ENCODE measurements at regions of chr14 and their contacts with region 1.

Region 1: DNA sequence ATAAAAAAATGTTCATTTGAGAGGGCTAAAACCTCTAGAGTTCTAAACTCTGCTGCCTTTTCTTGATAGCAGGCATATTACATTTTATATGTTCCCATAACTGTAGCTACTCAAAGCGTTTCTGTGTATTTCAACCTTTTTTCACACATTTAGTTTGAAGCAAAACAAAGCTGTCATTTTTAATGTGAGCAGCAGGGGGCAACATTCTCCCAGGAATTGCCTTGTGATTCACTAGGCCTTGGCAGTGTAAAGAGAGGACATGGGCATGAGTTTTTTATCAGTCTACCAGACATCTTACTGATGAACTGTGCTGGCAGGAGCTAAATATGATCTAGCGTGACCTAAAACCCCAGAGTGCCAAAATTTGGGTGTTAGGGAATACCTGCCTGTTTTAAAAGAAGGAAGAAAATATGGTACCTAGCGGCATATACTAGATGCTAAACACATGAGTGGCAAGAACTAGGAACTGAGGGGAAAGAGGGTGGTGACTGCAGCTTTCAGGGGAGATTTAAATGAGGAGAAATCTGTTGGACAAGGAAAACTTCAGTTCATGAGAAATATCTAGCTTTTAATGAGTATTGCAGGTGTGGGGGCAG is 65.3 kb downstream of the IFT43 start:
- DNase-seq: no peak

Region 2: GRCh38 chr14:76339728-76340615 is 289.1 kb after region 1 on chr14:
- intact Hi-C with region 1: no loop called
- DNase-seq: peak; percentile 47

Region 3: DNA sequence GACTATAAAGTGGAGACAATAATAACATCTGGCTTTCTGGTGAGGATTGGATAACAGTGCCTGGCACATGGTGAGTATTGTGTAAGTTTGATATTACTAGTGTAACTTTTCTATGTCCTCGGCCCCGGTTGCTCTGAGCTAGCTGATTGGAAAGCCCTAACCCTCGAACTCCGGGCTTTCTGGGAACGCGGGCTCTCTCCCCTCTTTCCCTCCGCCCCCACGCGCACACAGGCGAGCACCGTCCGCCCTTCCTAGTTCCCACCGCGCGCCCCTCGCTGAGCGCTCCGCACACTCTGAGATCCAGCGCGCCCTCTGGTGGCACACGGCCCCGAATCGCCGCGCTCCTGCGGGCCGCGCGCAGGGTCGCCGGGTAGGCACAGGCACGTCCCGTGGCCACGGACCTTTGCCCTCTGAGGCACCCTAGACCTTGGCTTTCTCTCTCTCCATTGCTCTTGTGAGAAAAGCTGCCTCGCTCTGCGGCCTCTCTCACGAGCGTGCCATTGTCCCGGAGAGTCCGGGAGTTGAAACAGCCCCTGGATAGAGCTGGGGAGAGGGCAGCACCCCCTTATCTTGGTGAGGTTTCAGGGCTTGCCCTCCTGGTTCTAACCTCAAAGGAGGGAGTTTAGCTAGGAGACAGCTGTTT is 301.9 kb after region 1 on chr14:
- intact Hi-C with region 1: loop called (anchors 5 kb)
- DNase-seq: peak; percentile 70

Region 4: GRCh38 chr14:76386915-76387782 is 336.3 kb after region 1 on chr14:
- intact Hi-C with region 1: loop called (anchors 1 kb)
- DNase-seq: peak; percentile 79

Region 5: DNA sequence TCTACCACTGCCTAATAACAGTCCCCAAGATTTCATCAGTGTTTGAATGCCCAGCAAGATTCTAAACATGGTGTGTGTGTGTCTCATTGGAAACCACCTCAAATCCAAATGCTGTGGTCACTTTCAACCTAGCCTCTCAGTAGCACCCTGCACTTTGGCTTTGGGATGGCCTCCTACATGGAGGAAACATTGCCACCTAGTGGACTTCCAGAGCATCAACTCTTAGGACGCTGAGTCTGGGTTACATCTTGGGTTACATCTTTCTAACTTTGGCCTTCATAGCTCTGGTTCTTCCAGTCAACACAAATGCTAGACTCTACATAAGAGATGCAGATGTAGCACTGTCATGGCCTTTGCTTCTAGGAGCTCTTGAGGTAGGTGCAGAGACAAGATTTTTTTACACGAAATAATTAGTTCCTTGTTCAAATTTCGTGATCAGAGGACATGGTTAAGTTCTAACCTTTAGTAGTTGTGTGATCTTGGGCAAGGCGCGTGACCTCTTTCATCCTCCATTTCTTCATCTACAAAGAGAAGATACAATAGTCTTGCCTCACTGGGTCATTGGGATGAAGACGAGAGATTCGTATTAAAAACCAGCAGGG is 596.9 kb after region 1 on chr14:
- intact Hi-C with region 1: loop called (anchors 10 kb)
- DNase-seq: no peak